ENCODE measurements at regions of chr12 and their contacts with region 1.

Region 1: GRCh38 chr12:80936498-80937390 is 990 bp downstream of the LIN7A start:
- DNase-seq: peak; percentile 49
- H3K4me3 ChIP-seq: peak overlapping the region; percentile 88
- H3K27ac ChIP-seq: peak overlapping the region; percentile 96
- H3K4me1 ChIP-seq: peaks cover 29% of the 10 kb centered on the region
- H3K27me3 ChIP-seq: peaks cover 16% of the 10 kb centered on the region
- CTCF ChIP-seq: no peak

Region 2: DNA sequence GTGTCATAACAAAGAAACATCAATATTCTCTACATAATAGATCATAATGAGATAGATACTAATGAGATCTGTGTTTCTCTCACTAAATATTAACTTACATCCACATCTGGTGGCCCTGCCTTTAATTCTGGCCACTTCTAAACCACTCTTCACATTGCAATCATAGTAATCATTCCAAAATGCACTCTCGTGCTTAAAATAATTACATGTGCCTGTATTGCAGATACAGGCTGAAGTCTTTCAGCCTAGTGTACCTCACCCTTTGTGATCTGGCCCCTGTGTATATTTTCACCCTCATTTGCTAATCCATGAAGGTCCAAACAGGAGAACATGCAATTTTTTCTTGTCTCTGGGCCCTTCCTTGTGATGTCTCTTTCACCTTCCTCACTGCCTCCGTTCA is 107.0 kb before region 1 on chr12:
- intact Hi-C with region 1: loop called (anchors 5 kb)
- DNase-seq: no peak
- H3K4me3 ChIP-seq: no peak overlapping the region
- H3K27ac ChIP-seq: peak overlapping the region; percentile 75
- H3K4me1 ChIP-seq: peaks cover 27% of the 10 kb centered on the region
- H3K27me3 ChIP-seq: no peaks in the 10 kb centered on the region
- CTCF ChIP-seq: no peak

Measured in left ventricle myocardium inferior (tissue), 1 donor.